ENCODE measurements at regions of chr15 and their contacts with region 1.

Region 1: DNA sequence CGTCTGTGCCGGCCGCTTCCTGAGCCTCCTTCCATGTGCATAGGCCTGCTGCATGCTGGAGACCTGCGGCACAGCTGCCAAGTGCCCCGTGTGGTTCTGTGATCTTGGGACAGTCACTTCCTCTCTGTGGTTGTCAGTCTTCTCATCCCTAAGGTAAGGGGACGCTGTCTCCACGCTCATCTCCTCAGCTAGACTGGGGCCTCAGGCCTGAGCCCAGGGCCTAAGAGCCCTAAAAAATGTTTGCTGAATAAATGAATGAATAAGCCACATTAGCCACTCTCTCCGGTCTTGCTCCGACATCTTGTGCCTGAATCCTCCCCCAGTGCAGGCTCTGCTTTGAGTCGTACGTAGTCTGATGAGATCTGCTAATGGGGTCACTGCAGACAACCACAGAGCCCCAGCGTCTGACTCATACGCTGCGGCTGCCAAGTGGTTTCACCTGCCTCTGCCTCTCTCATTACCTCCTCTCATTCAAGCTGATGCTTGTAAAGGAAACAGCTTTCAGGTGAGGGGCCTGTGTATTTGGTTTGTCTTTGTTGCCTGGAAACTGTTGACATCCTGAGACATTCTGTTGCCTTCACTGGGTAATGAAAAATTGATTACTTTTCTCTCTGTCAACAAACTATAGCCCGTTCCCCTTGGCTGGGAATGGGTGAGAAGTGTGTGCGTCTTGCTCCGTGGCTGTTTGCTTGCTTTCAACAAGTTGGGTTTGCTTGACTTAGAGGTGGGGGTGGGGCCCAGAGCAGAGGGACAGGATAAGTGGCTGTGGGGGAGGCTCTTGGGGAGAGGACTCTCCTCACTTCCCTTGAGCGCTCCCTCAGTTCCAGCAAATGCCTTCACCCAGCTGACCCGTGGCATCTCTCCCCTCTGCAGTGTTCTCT is 15.9 kb downstream of the RPLP1 start:
- DNase-seq: peak; percentile 75
- H3K4me3 Mint-ChIP-seq: peak overlapping the region; percentile 61
- H3K27ac Mint-ChIP-seq: peak overlapping the region; percentile 90
- H3K4me1 Mint-ChIP-seq: peaks cover 24% of the 10 kb centered on the region
- H3K27me3 Mint-ChIP-seq: peaks cover 13% of the 10 kb centered on the region

Region 2: DNA sequence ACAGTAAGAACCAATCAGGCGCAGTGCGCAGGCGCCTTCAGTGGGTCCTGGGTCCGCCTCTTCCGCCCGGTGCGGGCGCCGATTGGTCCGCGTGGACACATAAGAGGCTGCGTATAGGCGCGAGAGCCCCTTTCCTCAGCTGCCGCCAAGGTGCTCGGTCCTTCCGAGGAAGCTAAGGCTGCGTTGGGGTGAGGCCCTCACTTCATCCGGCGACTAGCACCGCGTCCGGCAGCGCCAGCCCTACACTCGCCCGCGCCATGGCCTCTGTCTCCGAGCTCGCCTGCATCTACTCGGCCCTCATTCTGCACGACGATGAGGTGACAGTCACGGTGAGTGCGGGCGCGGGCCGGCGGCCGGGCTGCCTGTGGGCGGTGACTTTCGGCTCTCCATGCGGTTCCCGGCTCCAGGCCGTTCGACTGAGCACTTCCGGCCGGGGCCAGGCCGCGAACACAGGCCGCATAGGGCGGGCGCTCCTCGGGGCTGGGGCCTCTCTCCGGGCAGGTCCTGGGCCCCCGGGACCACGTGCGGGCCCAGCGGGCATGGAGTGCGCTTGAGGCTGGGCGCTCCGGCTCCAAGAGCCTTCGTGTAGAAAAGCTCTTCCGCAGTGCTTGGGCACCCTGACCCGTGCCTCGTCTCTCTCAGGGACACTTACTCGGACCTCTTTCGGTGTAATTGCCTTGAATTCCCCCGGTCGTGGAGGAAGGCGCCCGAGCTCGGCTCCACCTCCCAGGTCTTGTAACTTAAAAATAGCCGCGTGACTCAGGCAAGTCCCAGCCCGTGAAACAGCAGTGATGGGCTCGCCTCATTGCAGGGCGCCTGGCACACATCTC is 15.6 kb before region 1 on chr15 and contains the start of gene RPLP1:
- intact Hi-C with region 1: loop called (anchors 2 kb)
- DNase-seq: peak; percentile 93
- H3K4me3 Mint-ChIP-seq: peak within 1 kb of the TSS; percentile 99
- H3K27ac Mint-ChIP-seq: peak within 1 kb of the TSS; percentile 100
- H3K4me1 Mint-ChIP-seq: peaks cover 35% of the 10 kb centered on the region
- H3K27me3 Mint-ChIP-seq: no peaks in the 10 kb centered on the region
- total RNA-seq, gene RPLP1: 1,633 and 1,710 TPM in 2 replicates

Region 3: GRCh38 chr15:69604072-69604411 is 135.6 kb after region 1 on chr15:
- intact Hi-C with region 1: no loop called
- DNase-seq: no peak
- H3K4me3 Mint-ChIP-seq: no peak overlapping the region
- H3K27ac Mint-ChIP-seq: no peak overlapping the region
- H3K4me1 Mint-ChIP-seq: peaks cover 7% of the 10 kb centered on the region
- H3K27me3 Mint-ChIP-seq: peaks cover 17% of the 10 kb centered on the region

Region 4: GRCh38 chr15:69719527-69720240 is 251.2 kb after region 1 on chr15:
- intact Hi-C with region 1: loop called (anchors 2 kb)
- DNase-seq: peak; percentile 24
- H3K4me3 Mint-ChIP-seq: no peak overlapping the region
- H3K27ac Mint-ChIP-seq: peak overlapping the region; percentile 9
- H3K4me1 Mint-ChIP-seq: peaks cover 72% of the 10 kb centered on the region
- H3K27me3 Mint-ChIP-seq: peaks cover 30% of the 10 kb centered on the region

Region 5: GRCh38 chr15:69760890-69761568 is 292.5 kb after region 1 on chr15:
- intact Hi-C with region 1: loop called (anchors 1 kb)
- DNase-seq: peak; percentile 79
- H3K4me3 Mint-ChIP-seq: peak overlapping the region; percentile 72
- H3K27ac Mint-ChIP-seq: peak overlapping the region; percentile 92
- H3K4me1 Mint-ChIP-seq: peaks cover 81% of the 10 kb centered on the region
- H3K27me3 Mint-ChIP-seq: peaks cover 2% of the 10 kb centered on the region